Activated CD4-positive, alpha-beta T cell treated with anti-CD3 and anti-CD28 coated beads for 36 hours (primary cell): ENCODE measurements at regions of chr19 and their contacts with region 1.

Region 1: GRCh38 chr19:56538254-56538760 is 441 bp upstream of the ZFP28 start:
- DNase-seq: peak; percentile 95
- ATAC-seq: peak; percentile 97
- H3K4me3 Mint-ChIP-seq: peak overlapping the region; percentile 74
- H3K27ac Mint-ChIP-seq: peak overlapping the region; percentile 87
- H3K4me1 Mint-ChIP-seq: peaks cover 15% of the 10 kb centered on the region
- H3K27me3 Mint-ChIP-seq: no peaks in the 10 kb centered on the region

Region 2: DNA sequence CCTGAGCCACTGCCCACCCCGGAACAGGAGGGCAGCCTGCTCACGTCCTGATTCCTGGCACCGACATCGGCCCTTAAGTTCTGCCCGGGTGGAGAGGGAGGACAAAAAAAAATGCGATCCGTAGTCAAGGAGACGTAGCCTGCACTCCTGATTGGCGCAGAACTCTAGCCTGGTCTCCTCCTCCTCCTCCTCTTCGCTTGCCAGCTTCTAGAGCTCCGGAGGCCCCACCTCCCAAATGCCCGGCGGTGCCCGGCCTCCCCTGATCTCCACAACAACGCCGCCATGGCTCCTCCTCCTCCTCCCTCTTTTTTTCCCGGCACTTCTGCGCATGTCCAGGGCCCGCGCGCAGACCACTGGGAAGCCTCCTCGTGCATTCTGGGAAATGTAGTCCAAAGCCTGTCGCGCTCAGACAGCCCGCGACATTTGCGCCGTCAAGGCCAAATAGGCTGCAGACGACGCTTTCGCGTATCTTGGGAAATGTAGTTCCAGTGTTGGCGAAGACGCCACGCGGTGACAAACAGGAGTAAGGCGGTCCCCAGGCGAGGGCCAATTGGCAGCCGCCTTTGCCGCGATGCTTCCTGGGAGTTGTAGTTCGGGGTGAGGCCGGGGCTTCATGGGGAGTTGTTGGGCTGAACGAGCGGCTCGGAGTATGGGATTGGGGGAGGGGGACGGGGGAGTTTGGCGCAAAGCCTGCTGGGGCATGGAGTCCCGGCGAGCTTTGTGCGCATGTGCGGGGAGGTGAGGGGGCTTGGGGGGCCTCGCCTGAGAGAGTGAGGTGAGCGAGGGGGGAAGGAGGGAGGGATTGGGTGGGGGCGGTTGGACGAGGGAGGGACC is 397.5 kb before region 1 on chr19 and contains the start of gene ZNF444:
- CTCF ChIA-PET with region 1: no interaction called
- POLR2A ChIA-PET with region 1: no interaction called
- intact Hi-C with region 1: loop called in 1 of 2 experiments (anchors 1 kb)
- DNase-seq: peak; percentile 99
- ATAC-seq: peak; percentile 90
- H3K4me3 Mint-ChIP-seq: peak within 1 kb of the TSS; percentile 89
- H3K27ac Mint-ChIP-seq: peak within 1 kb of the TSS; percentile 94
- H3K4me1 Mint-ChIP-seq: peaks cover 31% of the 10 kb centered on the region
- H3K27me3 Mint-ChIP-seq: no peaks in the 10 kb centered on the region
- total RNA-seq, gene ZNF444: 29.2 to 32.2 TPM

Region 3: GRCh38 chr19:56393119-56394012 is 144.9 kb before region 1 on chr19 and contains the start of gene ZNF582:
- CTCF ChIA-PET with region 1: no interaction called
- POLR2A ChIA-PET with region 1: no interaction called
- intact Hi-C with region 1: loop called in 1 of 2 experiments (anchors 1 kb)
- DNase-seq: peak; percentile 97
- ATAC-seq: peak; percentile 99
- H3K4me3 Mint-ChIP-seq: peak within 1 kb of the TSS; percentile 84
- H3K27ac Mint-ChIP-seq: peak within 1 kb of the TSS; percentile 96
- H3K4me1 Mint-ChIP-seq: peaks cover 11% of the 10 kb centered on the region
- H3K27me3 Mint-ChIP-seq: no peaks in the 10 kb centered on the region
- total RNA-seq, gene ZNF582: 0.98 to 1.8 TPM

Region 4: DNA sequence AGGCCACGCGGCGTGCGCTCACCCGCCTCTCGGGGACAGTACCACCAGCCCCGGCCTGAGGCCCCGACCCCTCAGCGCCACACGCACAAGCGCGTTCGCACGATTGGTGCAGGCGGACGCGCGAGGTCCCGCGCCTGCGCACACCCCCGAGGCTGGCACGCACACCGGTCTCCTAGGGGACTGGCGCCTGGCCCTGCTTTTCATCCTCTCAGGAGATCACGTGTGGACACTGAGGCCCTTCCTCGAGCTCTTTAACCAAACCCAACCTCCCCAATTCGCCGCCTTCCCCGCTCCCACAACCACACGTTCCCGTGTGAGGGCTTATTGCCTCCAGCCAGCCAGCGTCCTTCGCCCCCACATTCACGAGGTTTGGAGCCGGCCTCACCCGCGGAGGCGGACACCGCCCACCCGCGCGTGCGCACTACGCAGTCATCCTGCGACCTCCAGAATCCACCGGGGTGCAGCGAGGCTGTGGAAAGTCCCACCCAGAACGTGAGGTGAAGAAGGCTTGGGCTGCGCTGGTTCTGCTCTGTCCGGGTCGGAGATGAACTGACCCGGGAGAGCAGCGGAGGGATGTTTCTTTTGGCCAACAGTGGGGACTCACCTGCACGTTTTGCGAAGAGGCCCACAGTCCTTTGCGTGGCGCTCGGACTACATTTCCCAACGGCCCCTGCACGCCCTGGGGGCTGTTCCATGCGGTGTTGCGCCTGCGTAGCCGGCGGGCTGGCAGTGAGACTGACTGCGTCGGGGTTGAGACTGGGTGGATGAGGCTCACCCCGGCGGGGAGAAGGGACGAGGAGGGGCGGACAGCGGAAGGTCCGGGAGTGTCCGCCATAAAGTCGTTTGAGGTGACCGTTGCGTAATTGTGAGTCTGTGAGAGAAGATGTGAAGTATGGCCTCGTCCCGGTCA is 60.6 kb before region 1 on chr19:
- CTCF ChIA-PET with region 1: no interaction called
- POLR2A ChIA-PET with region 1: no interaction called
- intact Hi-C with region 1: loop called in 1 of 2 experiments (anchors 1 kb)
- DNase-seq: peak; percentile 86
- ATAC-seq: peak; percentile 87
- H3K4me3 Mint-ChIP-seq: peak overlapping the region; percentile 85
- H3K27ac Mint-ChIP-seq: peak overlapping the region; percentile 94
- H3K4me1 Mint-ChIP-seq: peaks cover 15% of the 10 kb centered on the region
- H3K27me3 Mint-ChIP-seq: peaks cover 13% of the 10 kb centered on the region

Region 5: GRCh38 chr19:56567274-56568120 is 29.2 kb after region 1 on chr19 and contains the start of gene ZNF470:
- CTCF ChIA-PET with region 1: no interaction called
- POLR2A ChIA-PET with region 1: no interaction called
- intact Hi-C with region 1: loop called (anchors 1 to 2 kb)
- DNase-seq: peak; percentile 94
- ATAC-seq: peak; percentile 97
- H3K4me3 Mint-ChIP-seq: peak within 1 kb of the TSS; percentile 88
- H3K27ac Mint-ChIP-seq: peak within 1 kb of the TSS; percentile 92
- H3K4me1 Mint-ChIP-seq: peaks cover 16% of the 10 kb centered on the region
- H3K27me3 Mint-ChIP-seq: no peaks in the 10 kb centered on the region
- total RNA-seq, gene ZNF470: 5.0 to 5.6 TPM

Region 6: DNA sequence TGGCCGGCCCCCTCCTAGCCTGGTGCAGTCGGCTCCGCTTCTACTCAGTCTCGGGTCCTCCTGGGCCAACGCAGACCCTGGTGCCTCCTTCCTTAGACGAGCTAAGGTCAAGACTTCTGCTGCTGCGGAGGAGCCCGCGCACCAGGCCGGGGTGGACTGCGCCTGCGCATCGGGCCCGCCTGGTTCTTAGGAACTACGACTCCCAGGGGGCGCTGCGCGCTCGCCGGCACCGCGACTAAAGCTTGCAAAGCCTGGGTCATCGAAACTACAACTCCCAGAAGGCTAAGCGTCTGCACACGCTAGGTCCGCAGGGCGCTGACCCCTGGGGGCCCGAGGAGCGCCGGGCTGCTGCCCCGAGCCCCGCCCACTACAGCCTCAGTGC is 133.3 kb after region 1 on chr19 and contains the start of gene ZNF835:
- CTCF ChIA-PET with region 1: no interaction called
- POLR2A ChIA-PET with region 1: no interaction called
- intact Hi-C with region 1: loop called in 1 of 2 experiments (anchors 1 kb)
- DNase-seq: peak; percentile 94
- ATAC-seq: peak; percentile 96
- H3K4me3 Mint-ChIP-seq: peak within 1 kb of the TSS; percentile 84
- H3K27ac Mint-ChIP-seq: peak within 1 kb of the TSS; percentile 87
- H3K4me1 Mint-ChIP-seq: peaks cover 11% of the 10 kb centered on the region
- H3K27me3 Mint-ChIP-seq: no peaks in the 10 kb centered on the region
- total RNA-seq, gene ZNF835: 2.8 to 4.5 TPM

Region 7: GRCh38 chr19:57410877-57411671 is 872.8 kb after region 1 on chr19 and contains the start of gene ZNF17:
- CTCF ChIA-PET with region 1: no interaction called
- POLR2A ChIA-PET with region 1: no interaction called
- intact Hi-C with region 1: loop called in 1 of 2 experiments (anchors 1 kb)
- DNase-seq: peak; percentile 96
- ATAC-seq: peak; percentile 100
- H3K4me3 Mint-ChIP-seq: peak within 1 kb of the TSS; percentile 93
- H3K27ac Mint-ChIP-seq: peak within 1 kb of the TSS; percentile 84
- H3K4me1 Mint-ChIP-seq: peaks cover 14% of the 10 kb centered on the region
- H3K27me3 Mint-ChIP-seq: no peaks in the 10 kb centered on the region
- total RNA-seq, gene ZNF17: 6.4 to 8.3 TPM